Ascending aorta (tissue), 2 donors: ENCODE measurements at regions of chr10 and their contacts with region 1.

Region 1: DNA sequence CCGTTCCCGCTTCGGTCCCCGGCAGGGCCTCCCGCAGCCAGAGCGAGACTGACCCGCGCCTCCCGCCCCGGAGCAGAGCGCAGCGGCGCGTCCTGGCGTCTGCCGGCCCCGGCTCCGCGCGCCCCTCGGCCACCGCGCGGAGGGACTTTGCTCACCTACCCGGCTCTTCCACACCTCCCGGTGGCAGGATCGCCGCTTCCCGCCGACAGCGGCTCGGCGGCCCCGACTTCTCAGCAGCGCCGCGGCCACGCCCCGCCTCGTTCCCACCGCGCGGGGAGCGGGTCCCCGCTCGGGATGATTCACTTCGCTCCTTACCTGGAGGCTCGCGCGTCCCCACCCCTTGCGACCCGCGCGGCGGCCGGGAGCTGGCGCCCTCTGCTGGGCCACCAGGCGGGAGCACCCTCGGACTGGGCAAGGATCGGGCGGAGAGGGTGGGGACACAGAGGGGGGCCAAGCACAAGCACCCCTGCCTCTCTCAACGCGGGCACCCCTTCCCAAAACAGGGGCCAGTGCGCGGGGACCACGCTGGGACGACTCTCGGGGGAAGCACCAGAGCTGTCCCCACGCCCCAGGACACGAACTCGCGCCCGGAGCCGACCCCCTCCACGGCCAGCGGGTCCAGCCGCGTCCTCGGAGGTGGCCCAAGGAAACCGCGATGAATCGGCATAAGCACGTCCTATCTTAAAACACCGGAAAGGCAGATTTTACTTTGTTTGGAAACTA is 101.0 kb upstream of the SVIL start:
- DNase-seq: peak; percentile 60 to 94
- H3K4me3 ChIP-seq: peak overlapping the region; percentile 74 to 97
- H3K27ac ChIP-seq: peak overlapping the region; percentile 95 to 98
- H3K4me1 ChIP-seq: peaks cover 7 to 20% of the 10 kb centered on the region in 2 donors
- H3K27me3 ChIP-seq: no peaks in the 10 kb centered on the region
- CTCF ChIP-seq: peak; percentile 94 to 98 (median 97)

Region 2: GRCh38 chr10:29022473-29022872 is 713.3 kb before region 1 on chr10:
- intact Hi-C with region 1: no loop called
- DNase-seq: no peak
- H3K4me3 ChIP-seq: no peak overlapping the region
- H3K27ac ChIP-seq: no peak overlapping the region
- H3K4me1 ChIP-seq: no peaks in the 10 kb centered on the region
- H3K27me3 ChIP-seq: no peaks in the 10 kb centered on the region
- CTCF ChIP-seq: no peak

Region 3: GRCh38 chr10:29590915-29591650 is 144.7 kb before region 1 on chr10:
- intact Hi-C with region 1: loop called (anchors 5 kb)
- DNase-seq: no peak
- H3K4me3 ChIP-seq: no peak overlapping the region
- H3K27ac ChIP-seq: peak overlapping the region; percentile 24 to 74
- H3K4me1 ChIP-seq: peaks cover 9 to 49% of the 10 kb centered on the region in 2 donors
- H3K27me3 ChIP-seq: no peaks in the 10 kb centered on the region
- CTCF ChIP-seq: no peak

Region 4: GRCh38 chr10:29689001-29689400 is 46.8 kb before region 1 on chr10:
- intact Hi-C with region 1: loop called (anchors 2 kb)
- DNase-seq: no peak
- H3K4me3 ChIP-seq: no peak overlapping the region
- H3K27ac ChIP-seq: peak overlapping the region; percentile 47 to 84
- H3K4me1 ChIP-seq: peaks cover 15 to 37% of the 10 kb centered on the region in 2 donors
- H3K27me3 ChIP-seq: no peaks in the 10 kb centered on the region
- CTCF ChIP-seq: no peak

Region 5: GRCh38 chr10:29784175-29784773 is 48.5 kb after region 1 on chr10:
- intact Hi-C with region 1: loop called (anchors 1 kb)
- DNase-seq: peak; percentile 63 to 93
- H3K4me3 ChIP-seq: no peak overlapping the region
- H3K27ac ChIP-seq: peak overlapping the region; percentile 85 to 87
- H3K4me1 ChIP-seq: peaks cover 3 to 25% of the 10 kb centered on the region in 2 donors
- H3K27me3 ChIP-seq: no peaks in the 10 kb centered on the region
- CTCF ChIP-seq: no peak

Region 6: DNA sequence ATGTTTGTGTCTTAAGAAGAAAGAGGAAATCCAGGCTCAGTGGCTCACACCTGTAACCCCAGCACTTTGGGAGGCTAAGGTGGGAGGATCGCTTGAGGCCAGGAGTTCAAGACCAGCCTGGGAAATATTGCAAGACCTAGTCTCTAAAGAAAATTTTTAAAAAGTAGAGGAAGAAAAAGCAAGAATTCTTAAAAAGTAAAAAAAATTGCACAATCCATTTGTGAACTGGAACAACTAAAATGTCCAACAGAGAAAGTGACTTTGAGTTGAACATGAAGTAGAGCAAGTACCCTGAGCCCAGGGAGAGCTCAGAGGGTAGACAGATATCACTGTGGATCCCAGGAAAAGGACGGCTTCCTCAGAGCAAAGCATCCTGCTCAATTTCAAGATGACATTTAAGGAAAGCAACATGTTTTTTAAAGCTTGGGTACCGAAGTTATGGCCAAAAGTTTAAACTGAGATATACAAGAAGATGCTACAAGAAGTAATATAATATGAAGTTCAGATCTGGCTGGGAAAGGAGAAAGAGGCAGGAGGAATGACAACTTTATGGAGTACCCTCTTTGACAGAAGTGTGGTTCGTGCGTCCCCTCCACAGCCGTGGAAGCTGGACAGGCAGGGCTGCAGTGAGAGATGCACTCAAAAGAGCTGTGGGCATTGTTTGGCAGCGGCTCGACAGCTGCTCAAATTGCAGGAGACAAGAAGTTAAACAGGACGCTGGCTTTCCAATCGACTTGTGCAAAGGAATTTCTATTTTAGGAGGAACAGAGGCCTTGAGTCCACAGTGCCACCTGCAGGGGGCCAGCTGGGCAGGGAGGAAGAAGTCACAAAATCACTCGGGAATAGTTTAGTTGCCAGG is 122.3 kb after region 1 on chr10:
- intact Hi-C with region 1: loop called (anchors 1 kb)
- DNase-seq: peak in 1 of 2 donors; percentile 91
- H3K4me3 ChIP-seq: peak overlapping the region in 1 of 2 donors; percentile 15
- H3K27ac ChIP-seq: peak overlapping the region; percentile 66 to 68
- H3K4me1 ChIP-seq: peaks cover 9 to 16% of the 10 kb centered on the region in 2 donors
- H3K27me3 ChIP-seq: no peaks in the 10 kb centered on the region
- CTCF ChIP-seq: peak; percentile 65 to 84 (median 81)

Region 7: GRCh38 chr10:29998142-29998808 is 262.5 kb after region 1 on chr10:
- intact Hi-C with region 1: loop called (anchors 2 kb)
- DNase-seq: peak in 1 of 2 donors; percentile 81
- H3K4me3 ChIP-seq: no peak overlapping the region
- H3K27ac ChIP-seq: no peak overlapping the region
- H3K4me1 ChIP-seq: peaks cover 20 to 35% of the 10 kb centered on the region in 2 donors
- H3K27me3 ChIP-seq: no peaks in the 10 kb centered on the region
- CTCF ChIP-seq: peak; percentile 94 to 97 (median 96)